ENCODE measurements at regions of chr1 and their contacts with region 1.

Region 1: DNA sequence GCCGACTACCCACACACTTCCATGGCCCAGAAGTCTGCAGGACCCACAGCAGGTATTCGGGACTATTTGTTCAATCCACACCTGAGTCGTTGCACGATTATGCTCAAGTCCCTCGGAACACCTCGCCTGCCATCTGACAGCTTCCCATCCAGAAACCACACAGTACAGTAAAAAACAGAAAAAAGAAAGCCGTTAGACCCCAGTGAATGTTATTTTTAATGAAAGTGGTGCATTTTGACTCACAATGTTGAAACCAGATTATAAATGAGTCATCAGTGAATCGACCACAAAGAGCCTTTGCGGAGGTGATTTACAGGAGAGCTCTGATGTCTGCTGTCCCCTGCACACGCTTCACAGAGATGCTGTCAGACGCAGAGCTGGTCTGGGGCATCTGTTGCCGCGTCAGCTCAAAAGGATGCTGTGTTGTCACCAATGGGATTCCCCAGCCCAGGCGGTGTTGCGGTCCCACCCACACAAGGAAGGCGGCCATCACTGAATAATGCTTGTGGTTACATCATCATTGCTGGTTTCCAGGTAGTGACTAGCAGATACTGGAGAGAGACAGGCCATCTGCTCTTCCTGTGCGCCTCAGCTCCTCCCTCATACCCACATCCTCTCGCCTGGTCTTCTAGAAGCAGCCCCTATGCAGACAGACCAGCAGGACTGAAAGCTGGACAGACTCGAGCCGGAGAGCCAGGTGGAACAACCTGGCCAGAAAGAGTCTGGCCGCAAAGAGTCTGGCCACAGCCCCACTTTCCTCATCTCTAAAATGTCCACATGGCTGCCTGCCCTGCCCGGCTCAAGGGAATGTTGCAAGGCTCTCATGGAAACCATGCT is 116.8 kb downstream of the TOMM20 start:
- DNase-seq: peak; percentile 98
- H3K4me3 Mint-ChIP-seq: peak overlapping the region; percentile 76
- H3K27ac Mint-ChIP-seq: peak overlapping the region; percentile 98
- H3K4me1 Mint-ChIP-seq: peaks cover 79% of the 10 kb centered on the region
- H3K27me3 Mint-ChIP-seq: peaks cover 5% of the 10 kb centered on the region

Region 2: DNA sequence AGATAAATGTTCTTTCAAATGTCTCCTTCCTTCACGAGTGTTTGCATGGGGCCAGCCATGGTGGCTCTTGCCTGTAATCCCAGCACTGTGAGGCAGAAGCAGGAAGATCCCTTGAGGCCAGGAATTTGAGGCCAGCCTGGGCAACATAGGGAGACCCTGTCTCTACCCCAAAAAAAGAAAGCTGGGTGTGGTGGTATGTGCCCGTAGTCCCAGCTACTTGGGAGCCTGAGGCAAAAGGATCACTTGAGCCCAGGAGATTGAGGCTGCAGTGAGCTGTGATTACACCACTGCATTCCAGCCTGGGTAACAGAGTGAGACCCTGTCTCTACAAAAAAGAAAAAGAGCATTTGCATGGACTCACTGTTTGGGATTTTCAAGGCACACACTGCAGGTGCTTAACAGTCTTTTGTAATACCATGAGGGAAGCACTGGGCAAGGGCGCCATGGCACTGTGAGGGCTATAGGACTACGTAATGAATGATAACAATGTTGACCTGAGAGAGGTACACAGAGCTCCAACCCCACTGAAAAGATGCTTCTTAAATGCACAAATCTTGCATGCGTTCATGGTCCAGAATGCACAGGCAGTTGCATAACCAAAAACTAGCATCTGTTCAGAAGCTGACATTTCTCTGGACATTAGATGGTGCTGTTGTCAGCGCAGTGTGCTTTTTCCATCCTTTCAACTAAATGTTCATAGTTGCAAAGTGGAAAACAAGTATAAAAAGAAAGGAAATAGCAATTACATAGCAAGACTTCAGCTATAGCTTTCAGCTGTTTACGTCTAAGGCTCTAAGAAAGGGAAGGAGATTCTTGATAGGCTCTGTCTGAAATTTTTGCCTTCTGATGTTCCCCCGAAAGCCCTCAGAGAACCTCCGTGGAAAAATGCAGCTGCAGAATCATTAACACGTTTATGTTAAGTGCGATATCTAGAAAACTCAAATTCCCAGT is 525.0 kb before region 1 on chr1:
- intact Hi-C with region 1: loop called (anchors 2 kb)
- DNase-seq: peak; percentile 83
- H3K4me3 Mint-ChIP-seq: peak overlapping the region; percentile 68
- H3K27ac Mint-ChIP-seq: peak overlapping the region; percentile 96
- H3K4me1 Mint-ChIP-seq: peaks cover 35% of the 10 kb centered on the region
- H3K27me3 Mint-ChIP-seq: peaks cover 12% of the 10 kb centered on the region

Region 3: DNA sequence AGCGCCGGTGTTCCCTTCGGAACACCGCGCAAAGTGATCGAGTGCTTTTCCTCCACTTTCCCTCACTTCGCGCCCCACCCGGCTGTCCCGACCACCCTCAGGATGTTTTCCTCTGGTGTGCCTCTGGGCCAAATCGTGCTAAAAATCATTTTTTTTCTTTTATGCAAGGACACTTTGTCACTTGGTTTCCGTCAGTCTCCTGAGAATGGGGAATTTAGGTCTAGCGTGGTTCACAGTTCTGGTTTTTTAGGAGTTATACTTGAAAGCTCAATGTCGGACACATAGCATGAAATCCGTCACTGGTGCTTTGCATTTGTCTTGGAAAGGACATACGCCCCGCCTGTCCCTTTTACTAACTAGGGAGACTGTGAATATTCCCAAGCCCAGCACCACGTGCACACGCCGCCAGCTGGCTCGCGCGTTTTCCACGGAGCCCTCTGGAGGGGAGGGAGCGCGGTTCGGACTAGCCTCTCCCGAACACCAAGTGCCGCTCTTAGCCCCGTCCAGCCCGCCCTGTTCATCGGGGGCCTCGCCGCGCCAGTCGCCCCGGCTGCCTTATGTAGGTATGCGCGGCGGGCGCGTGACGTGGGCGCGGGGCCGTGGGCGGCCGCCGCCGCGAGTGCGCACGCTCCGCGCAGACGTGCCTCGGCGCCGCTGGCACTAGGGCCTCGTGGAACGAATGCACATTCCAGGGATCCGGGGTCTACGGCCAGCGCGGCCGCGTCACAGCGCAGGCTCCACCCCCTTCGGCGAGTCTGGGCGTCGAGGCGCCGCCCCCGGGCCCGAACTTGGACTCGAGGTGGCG is 401.3 kb before region 1 on chr1:
- intact Hi-C with region 1: loop called (anchors 1 kb)
- DNase-seq: peak; percentile 98
- H3K4me3 Mint-ChIP-seq: peak overlapping the region; percentile 95
- H3K27ac Mint-ChIP-seq: peak overlapping the region; percentile 100
- H3K4me1 Mint-ChIP-seq: peaks cover 47% of the 10 kb centered on the region
- H3K27me3 Mint-ChIP-seq: peaks cover 2% of the 10 kb centered on the region

Region 4: DNA sequence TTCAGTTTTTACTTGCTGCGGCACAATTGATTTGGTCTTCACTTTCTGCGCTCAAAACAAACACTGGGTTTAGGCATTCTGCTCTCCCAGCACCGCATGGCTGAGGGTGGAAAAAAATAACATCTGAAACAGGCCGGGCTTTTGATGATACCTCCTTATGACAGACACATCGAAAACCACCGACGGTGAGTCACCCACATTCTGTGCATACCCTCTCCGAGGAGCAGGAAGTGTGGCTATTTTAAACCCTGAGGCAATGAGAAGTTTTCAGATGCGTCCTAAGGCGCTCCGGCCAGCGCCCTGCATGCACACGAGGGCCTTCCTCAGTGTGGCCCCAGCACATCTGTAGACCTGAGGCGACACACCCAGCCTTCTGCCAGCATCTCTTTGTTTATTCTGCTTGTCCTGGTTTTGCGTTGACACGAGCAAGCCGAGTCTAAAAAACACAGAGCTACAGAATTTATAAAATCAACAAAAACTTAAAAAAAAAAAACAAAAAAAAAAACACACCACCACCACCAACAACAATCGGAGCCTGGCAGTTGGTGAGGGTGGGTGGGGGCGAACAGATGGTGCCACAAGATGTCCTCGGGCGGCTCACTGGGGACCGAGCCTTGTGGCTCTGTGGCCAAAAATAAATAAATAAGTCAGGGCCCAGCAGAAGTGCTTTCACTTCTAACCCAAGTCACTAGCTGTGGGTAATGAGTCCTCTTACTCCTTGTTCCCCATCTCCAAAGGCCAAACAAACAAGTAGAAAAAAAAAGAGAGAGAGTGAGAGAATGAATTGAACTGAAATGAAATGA is 239.3 kb before region 1 on chr1:
- intact Hi-C with region 1: loop called (anchors 1 kb)
- DNase-seq: peak; percentile 95
- H3K4me3 Mint-ChIP-seq: peak overlapping the region; percentile 65
- H3K27ac Mint-ChIP-seq: peak overlapping the region; percentile 95
- H3K4me1 Mint-ChIP-seq: peaks cover 54% of the 10 kb centered on the region
- H3K27me3 Mint-ChIP-seq: no peaks in the 10 kb centered on the region

Region 5: GRCh38 chr1:234925440-234926263 is 86.2 kb before region 1 on chr1:
- intact Hi-C with region 1: loop called (anchors 1 kb)
- DNase-seq: peak; percentile 78
- H3K4me3 Mint-ChIP-seq: peak overlapping the region; percentile 83
- H3K27ac Mint-ChIP-seq: peak overlapping the region; percentile 95
- H3K4me1 Mint-ChIP-seq: peaks cover 59% of the 10 kb centered on the region
- H3K27me3 Mint-ChIP-seq: no peaks in the 10 kb centered on the region

Region 6: GRCh38 chr1:234978397-234979295 is 33.2 kb before region 1 on chr1:
- intact Hi-C with region 1: loop called (anchors 1 kb)
- DNase-seq: peak; percentile 82
- H3K4me3 Mint-ChIP-seq: peak overlapping the region; percentile 79
- H3K27ac Mint-ChIP-seq: peak overlapping the region; percentile 98
- H3K4me1 Mint-ChIP-seq: peaks cover 80% of the 10 kb centered on the region
- H3K27me3 Mint-ChIP-seq: no peaks in the 10 kb centered on the region

Region 7: GRCh38 chr1:235075188-235075926 is 63.5 kb after region 1 on chr1:
- intact Hi-C with region 1: loop called (anchors 1 kb)
- DNase-seq: peak; percentile 82
- H3K4me3 Mint-ChIP-seq: peak overlapping the region; percentile 69
- H3K27ac Mint-ChIP-seq: peak overlapping the region; percentile 100
- H3K4me1 Mint-ChIP-seq: peaks cover 31% of the 10 kb centered on the region
- H3K27me3 Mint-ChIP-seq: no peaks in the 10 kb centered on the region